ENCODE measurements at regions of chr10 and their contacts with region 1.

Region 1: DNA sequence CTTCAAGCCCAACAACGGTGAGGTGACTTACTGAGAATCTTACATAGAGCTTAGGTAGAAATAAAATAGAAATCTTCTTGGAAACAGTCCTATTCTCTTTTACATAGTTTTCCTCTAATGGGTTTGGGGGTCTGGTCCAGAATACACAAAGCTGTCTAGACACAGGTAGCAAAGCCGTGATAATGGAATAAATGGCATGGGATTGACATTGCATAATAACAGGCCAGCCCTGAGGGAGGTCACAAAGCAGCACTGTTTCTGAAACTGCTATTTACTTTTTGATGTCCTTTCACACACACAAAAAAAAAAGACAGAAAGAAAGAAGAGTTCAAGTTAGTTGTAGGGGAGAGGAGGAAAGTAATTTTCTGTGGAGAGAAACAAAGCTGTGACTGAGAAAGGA is 364.8 kb upstream of the SORCS1 start:
- DNase-seq: no peak
- ATAC-seq: no peak
- H3K4me3 ChIP-seq: no peak overlapping the region
- H3K27ac ChIP-seq: no peak overlapping the region
- H3K4me1 ChIP-seq: no peaks in the 10 kb centered on the region
- H3K27me3 ChIP-seq: no peaks in the 10 kb centered on the region
- CTCF ChIP-seq: no peak
- EP300 ChIP-seq: no peak
- POLR2A ChIP-seq: no peak
- RAD21 ChIP-seq: no peak

Region 2: DNA sequence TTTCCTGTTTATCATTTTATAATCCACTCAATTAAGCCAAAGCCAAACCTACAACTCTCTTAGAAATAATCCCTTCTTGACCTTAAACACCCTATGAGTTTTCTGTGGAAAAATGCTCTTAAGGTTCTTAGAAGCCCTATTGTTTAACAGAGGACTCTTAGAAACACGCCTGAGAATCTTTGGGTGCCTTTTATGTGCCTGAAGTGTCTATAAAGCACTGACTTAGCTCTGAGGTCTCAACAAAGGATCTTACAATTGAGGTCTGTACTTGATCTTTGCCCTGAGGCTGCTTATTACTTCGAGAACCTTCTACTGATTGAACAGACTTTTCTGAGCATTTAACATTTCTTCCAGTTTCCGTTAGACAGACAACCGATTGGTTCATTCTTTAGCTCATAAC is 11.5 kb before region 1 on chr10:
- CTCF ChIA-PET with region 1: interaction called, 4 read pairs
- POLR2A ChIA-PET with region 1: interaction called, 4 read pairs
- RAD21 ChIA-PET with region 1: interaction called, 3 read pairs
- SMC1A ChIA-PET with region 1: interaction called, 10 read pairs
- in situ Hi-C with region 1: no loop called
- intact Hi-C with region 1: no loop called
- DNase-seq: no peak
- ATAC-seq: no peak
- H3K4me3 ChIP-seq: no peak overlapping the region
- H3K27ac ChIP-seq: no peak overlapping the region
- H3K4me1 ChIP-seq: no peaks in the 10 kb centered on the region
- H3K27me3 ChIP-seq: no peaks in the 10 kb centered on the region; a peak in 1 of 4 replicates
- CTCF ChIP-seq: no peak
- EP300 ChIP-seq: no peak
- POLR2A ChIP-seq: no peak
- RAD21 ChIP-seq: no peak

Measured in GM12878 (cell line).